ENCODE measurements at regions of chr6 and their contacts with region 1.

Region 1: DNA sequence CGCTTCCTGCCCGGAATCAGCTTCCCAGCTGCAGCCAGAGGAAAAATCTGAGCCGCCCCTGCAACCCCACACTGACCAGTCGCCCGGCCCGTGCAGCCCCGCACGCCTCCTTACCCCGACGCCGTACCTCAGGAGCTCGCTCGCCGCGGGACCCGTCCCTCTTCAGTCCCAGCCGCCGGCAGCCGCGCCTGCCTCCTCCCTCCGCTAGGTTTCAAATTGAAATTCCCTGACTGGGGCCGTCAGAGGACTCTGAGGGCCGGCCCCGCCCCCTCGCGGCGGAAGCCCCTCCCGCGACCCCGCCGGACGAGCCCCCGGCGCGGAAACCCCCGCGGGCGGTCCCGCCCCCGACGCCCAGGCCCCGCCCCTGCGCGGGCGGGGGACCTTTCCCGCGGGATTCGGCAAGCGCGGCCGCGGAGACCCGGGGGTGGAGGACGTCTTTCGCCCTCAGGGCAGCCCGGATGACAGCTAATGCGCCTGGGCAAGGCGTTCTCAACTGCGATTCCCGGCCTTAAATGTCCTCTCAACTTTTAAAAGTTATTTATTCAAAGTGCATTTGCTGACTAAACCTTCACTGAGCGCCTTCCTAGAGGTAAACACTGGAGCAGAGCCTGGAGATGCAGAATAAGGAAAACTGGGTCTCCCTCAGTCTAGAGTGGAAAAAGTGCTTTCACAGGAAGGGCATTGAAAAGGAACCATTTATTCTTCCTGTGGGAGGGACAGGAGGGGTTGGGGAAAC is at the start of gene EPB41L2:
- DNase-seq: peak; percentile 53 to 93
- H3K4me3 ChIP-seq: peak within 1 kb of the TSS; percentile 96 to 97
- H3K27ac ChIP-seq: peak within 1 kb of the TSS; percentile 77 to 83
- H3K4me1 ChIP-seq: peaks cover 3 to 7% of the 10 kb centered on the region in 2 donors
- H3K27me3 ChIP-seq: no peaks in the 10 kb centered on the region
- CTCF ChIP-seq: peak in 2 of 3 experiments; percentile 25 to 43
- total RNA-seq, gene EPB41L2: 163 TPM

Region 2: GRCh38 chr6:130322673-130323268 is 740.4 kb before region 1 on chr6:
- intact Hi-C with region 1: no loop called
- DNase-seq: peak in 1 of 2 donors; percentile 63
- H3K4me3 ChIP-seq: no peak overlapping the region
- H3K27ac ChIP-seq: no peak overlapping the region
- H3K4me1 ChIP-seq: no peaks in the 10 kb centered on the region
- H3K27me3 ChIP-seq: no peaks in the 10 kb centered on the region
- CTCF ChIP-seq: peak; percentile 51 to 83 (median 75)

Region 3: GRCh38 chr6:130885392-130886192 is 177.6 kb before region 1 on chr6:
- intact Hi-C with region 1: loop called (anchors 5 kb)
- DNase-seq: peak in 1 of 2 donors; percentile 82
- H3K4me3 ChIP-seq: no peak overlapping the region
- H3K27ac ChIP-seq: no peak overlapping the region
- H3K4me1 ChIP-seq: no peaks in the 10 kb centered on the region
- H3K27me3 ChIP-seq: no peaks in the 10 kb centered on the region
- CTCF ChIP-seq: peak; percentile 75 to 88 (median 75)

Region 4: GRCh38 chr6:130906736-130907381 is 156.3 kb before region 1 on chr6:
- intact Hi-C with region 1: loop called (anchors 5 kb)
- DNase-seq: no peak
- H3K4me3 ChIP-seq: no peak overlapping the region
- H3K27ac ChIP-seq: peak overlapping the region in 1 of 2 donors; percentile 6
- H3K4me1 ChIP-seq: peaks cover 0 to 7% of the 10 kb centered on the region in 2 donors
- H3K27me3 ChIP-seq: no peaks in the 10 kb centered on the region
- CTCF ChIP-seq: no peak

Region 5: DNA sequence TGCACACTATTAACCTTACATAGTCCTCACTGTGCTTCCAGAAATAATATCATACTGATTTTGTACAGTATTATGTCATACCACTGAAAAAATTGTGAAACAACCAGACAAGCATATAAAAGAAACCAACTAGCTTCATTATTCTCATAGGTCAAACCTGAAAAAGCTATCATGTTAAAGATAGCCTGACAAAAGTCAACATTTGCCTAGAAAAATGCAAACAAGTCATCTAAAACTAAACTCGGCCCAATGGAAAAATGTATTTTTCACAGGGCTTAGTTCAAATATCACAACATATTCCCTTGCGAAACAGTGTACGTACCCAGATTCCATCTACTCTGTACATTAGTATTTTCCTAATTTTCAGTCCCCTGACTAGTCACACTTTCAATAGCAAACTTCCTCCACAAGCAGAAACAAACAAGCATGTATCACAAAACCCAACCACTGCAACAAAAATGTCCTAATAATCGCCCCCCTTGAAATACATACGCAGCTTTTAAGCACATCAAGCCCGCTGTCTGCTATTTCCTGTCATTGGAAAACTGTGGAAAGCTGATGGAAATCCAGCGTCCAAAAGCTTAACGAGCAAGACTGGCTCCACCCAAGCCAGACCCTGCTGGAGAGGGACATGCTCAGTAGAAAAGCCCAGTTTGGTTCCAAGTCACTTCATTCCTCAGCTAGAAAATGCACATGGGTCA is 93.3 kb before region 1 on chr6:
- intact Hi-C with region 1: loop called (anchors 2 kb)
- DNase-seq: no peak
- H3K4me3 ChIP-seq: peak overlapping the region; percentile 42 to 66
- H3K27ac ChIP-seq: peak overlapping the region; percentile 60 to 73
- H3K4me1 ChIP-seq: peaks cover 0 to 22% of the 10 kb centered on the region in 2 donors
- H3K27me3 ChIP-seq: no peaks in the 10 kb centered on the region
- CTCF ChIP-seq: no peak

Region 6: GRCh38 chr6:131001111-131001736 is 62.0 kb before region 1 on chr6:
- intact Hi-C with region 1: loop called (anchors 5 kb)
- DNase-seq: no peak
- H3K4me3 ChIP-seq: peak overlapping the region; percentile 35 to 42
- H3K27ac ChIP-seq: no peak overlapping the region
- H3K4me1 ChIP-seq: peaks cover 0 to 14% of the 10 kb centered on the region in 2 donors
- H3K27me3 ChIP-seq: no peaks in the 10 kb centered on the region
- CTCF ChIP-seq: no peak

Region 7: GRCh38 chr6:131135244-131136020 is 72.2 kb after region 1 on chr6 and contains the start of gene AKAP7:
- intact Hi-C with region 1: loop called (anchors 1 kb)
- DNase-seq: peak in 1 of 2 donors; percentile 81
- H3K4me3 ChIP-seq: peak within 1 kb of the TSS; percentile 83 to 98
- H3K27ac ChIP-seq: peak within 1 kb of the TSS; percentile 87 to 94
- H3K4me1 ChIP-seq: no peaks in the 10 kb centered on the region
- H3K27me3 ChIP-seq: no peaks in the 10 kb centered on the region
- CTCF ChIP-seq: no peak
- total RNA-seq, gene AKAP7: 1.3 TPM

Region 8: DNA sequence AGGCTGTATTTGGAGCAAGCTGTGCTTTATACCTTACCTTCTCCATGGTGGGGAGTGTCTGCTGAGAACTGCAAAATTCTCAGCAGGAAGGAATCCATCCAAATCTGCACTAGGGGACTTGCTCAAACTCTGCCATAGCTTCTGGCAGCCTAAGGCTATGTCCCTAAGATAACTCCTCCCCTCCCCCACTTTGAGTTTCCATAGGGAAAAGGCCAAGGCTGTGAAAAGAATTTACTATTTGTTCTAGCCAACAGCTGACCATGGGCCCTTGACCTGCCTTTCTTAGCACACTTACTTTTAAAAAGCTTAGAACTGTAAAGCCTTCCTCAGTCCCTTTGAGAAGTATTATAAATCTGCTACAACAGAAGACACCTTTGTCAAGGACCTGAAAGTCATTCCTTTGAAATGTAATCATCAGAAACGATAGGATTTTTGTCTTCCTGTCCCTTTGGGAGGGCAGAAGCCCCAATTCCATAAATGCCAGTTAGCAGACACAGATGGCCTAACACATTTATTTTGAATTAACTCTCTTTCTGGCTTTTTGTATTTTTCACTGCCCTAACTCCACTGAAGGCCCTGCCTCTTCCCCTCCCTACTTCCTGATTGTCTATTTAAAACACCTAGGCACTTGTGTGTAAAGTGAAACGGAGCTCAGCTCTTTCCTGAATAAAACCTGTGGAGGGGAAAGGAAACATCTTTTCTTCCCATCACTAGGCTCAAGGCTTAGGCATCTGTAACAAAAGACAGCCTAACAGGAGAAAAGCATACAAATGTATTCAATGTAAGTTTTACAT is 229.1 kb after region 1 on chr6:
- intact Hi-C with region 1: no loop called
- DNase-seq: no peak
- H3K4me3 ChIP-seq: no peak overlapping the region
- H3K27ac ChIP-seq: no peak overlapping the region
- H3K4me1 ChIP-seq: no peaks in the 10 kb centered on the region
- H3K27me3 ChIP-seq: no peaks in the 10 kb centered on the region
- CTCF ChIP-seq: no peak

Region 9: GRCh38 chr6:132725947-132726607 is 1662.9 kb after region 1 on chr6:
- intact Hi-C with region 1: no loop called
- DNase-seq: no peak
- H3K4me3 ChIP-seq: no peak overlapping the region
- H3K27ac ChIP-seq: no peak overlapping the region
- H3K4me1 ChIP-seq: no peaks in the 10 kb centered on the region
- H3K27me3 ChIP-seq: no peaks in the 10 kb centered on the region
- CTCF ChIP-seq: no peak

Measured in ascending aorta (tissue), 2 donors.